PC-3 (cell line): ENCODE measurements at regions of chr2 and their contacts with region 1.

Region 1: GRCh38 chr2:19632403-19632991 is 269.3 kb downstream of the TTC32 start:
- DNase-seq: no peak
- ATAC-seq: no peak
- H3K4me3 ChIP-seq: no peak overlapping the region
- H3K27ac ChIP-seq: no peak overlapping the region
- H3K4me1 ChIP-seq: no peaks in the 10 kb centered on the region
- H3K27me3 ChIP-seq: no peaks in the 10 kb centered on the region
- CTCF ChIP-seq: no peak

Region 2: DNA sequence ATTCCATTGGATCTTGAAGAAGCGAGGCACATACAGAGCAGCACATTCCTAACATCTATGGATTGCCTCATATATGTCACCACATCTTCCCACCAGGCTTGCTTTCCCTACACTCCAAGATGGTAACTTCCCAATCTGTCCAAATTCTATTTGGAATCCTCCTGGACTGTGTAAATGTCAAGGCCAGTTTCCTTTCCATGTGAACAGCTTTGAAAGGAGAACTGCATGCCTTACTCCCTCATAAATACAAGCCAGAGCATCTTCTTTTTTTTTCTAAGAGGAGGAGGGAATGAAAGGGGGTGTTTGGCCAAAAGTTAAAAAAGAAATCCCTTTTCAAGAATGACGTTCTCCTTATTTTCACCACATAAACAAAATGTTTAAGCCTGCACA is 170.2 kb before region 1 on chr2:
- CTCF ChIA-PET with region 1: no interaction called
- POLR2A ChIA-PET with region 1: no interaction called
- intact Hi-C with region 1: no loop called
- DNase-seq: no peak
- ATAC-seq: no peak
- H3K4me3 ChIP-seq: no peak overlapping the region
- H3K27ac ChIP-seq: no peak overlapping the region
- H3K4me1 ChIP-seq: 0 out of 2 replicates have a peak, but pooled peaks cover 4% of the 10 kb centered on the region
- H3K27me3 ChIP-seq: no peaks in the 10 kb centered on the region
- CTCF ChIP-seq: no peak

Region 3: DNA sequence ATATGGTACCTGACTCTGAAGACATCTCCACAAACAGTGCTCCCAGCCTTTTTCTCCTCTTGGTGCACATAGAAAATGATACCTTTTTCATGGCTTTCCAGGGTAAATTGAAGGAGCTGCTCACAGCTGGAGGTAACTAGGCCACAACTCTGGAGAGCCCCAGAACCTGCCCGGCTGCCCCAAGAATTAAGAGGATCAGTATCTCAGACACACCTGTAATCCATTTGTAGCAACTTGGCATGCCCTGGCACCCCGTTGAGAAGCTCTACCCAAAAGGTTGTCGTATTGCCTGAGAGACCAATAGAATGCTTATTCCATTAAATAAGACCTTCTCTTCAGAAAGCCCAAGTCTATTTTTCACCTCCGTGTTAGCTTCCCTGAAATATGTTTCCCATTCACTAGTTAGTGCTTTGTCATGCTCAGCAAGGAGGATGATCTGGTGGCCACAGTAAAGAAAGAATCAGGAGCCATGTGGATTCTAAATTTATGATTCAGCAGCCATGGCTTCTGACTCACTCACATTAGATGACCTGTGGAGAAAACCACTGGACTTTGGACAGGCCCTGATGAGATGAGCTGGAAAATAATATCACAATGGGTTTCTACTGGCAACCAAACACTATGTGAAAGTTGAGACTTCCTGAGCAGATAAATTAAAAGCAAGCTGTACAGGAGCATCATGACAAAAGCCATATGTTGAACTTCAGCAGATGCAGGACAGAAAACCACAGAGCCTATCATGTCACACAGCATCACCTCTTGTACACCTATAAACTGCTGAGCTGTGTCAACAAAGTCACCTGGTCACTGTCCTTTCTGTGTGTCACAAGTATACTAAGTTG is 20.8 kb before region 1 on chr2:
- CTCF ChIA-PET with region 1: no interaction called
- POLR2A ChIA-PET with region 1: interaction called, 26 read pairs
- intact Hi-C with region 1: no loop called
- DNase-seq: peak; percentile 96
- ATAC-seq: peak; percentile 88
- H3K4me3 ChIP-seq: no peak overlapping the region
- H3K27ac ChIP-seq: peak overlapping the region; percentile 93
- H3K4me1 ChIP-seq: peaks cover 32% of the 10 kb centered on the region
- H3K27me3 ChIP-seq: no peaks in the 10 kb centered on the region
- CTCF ChIP-seq: no peak